ENCODE measurements at regions of chr17 and their contacts with region 1.

Region 1: DNA sequence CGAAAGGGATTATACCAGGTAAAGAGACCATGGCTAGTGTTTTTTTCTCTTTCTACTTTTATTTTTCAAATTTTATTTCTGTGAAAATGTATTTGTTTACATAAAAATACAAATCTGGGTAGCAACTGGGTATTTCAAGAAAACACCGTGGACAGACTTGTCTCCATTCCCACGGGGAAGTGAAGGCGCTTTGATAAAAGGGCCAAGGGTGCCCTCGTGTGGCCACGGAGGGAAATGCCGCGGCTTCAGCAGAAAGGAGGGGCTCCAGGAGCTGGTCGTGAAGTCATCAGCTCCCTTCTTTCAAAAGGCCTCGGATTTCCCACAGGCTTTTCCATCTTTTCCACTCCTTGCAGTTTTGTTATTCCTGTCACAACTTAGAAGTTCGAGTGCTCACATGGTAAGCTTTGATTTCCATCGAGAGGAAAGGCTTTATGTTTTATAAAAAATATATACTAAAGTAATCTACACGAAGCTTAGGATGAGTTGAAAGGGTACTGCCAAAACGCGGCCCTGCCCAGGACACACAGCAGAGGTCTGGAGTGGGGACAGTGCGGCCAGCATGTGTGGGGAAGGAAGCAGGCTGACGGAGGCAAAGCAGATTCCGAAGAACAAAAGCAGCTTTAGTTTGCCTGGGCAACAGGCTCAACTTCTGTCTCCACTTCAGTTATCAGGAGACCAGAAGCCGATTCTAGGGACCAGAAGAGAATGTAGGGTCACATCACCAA is 15.3 kb upstream of the MNT start:
- H3K4me3 ChIP-seq: no peak overlapping the region
- H3K27ac ChIP-seq: no peak overlapping the region
- H3K4me1 ChIP-seq: no peaks in the 10 kb centered on the region
- CTCF ChIP-seq: peak; percentile 65

Region 2: DNA sequence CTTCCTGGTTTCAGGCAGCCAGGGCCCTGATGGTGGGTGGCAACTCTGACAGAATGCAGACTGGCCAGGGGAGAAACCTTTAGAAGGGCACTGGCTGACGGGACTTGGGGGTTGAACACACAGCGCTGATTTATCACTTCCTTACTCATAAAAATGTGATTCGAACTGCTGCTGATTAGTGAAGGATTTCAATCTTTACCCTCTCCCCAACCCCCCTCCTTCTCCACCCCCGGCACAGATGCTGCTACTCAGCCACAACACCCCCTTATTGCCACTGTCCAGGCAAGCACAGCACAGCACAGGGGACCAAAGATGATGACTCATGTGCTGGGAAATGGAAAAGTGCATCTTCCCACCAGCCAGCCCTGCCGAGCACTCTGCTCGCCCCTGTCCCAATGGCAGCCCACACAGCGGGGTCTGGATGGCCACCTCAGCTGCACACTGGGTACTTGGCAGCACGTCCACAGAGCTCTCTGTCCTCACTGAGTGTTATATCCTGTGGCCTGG is 182.7 kb before region 1 on chr17:
- CTCF ChIA-PET with region 1: no interaction called
- POLR2A ChIA-PET with region 1: no interaction called
- H3K4me3 ChIP-seq: no peak overlapping the region
- H3K27ac ChIP-seq: no peak overlapping the region
- H3K4me1 ChIP-seq: no peaks in the 10 kb centered on the region
- CTCF ChIP-seq: no peak

Region 3: GRCh38 chr17:2354311-2354710 is 61.9 kb before region 1 on chr17:
- CTCF ChIA-PET with region 1: interaction called, 12 read pairs
- POLR2A ChIA-PET with region 1: no interaction called
- H3K4me3 ChIP-seq: no peak overlapping the region
- H3K27ac ChIP-seq: no peak overlapping the region
- H3K4me1 ChIP-seq: peaks cover 4% of the 10 kb centered on the region; the same call in 1 of the 2 replicates
- CTCF ChIP-seq: no peak

Region 4: GRCh38 chr17:2366747-2367494 is 49.3 kb before region 1 on chr17:
- CTCF ChIA-PET with region 1: interaction called, 18 read pairs
- POLR2A ChIA-PET with region 1: no interaction called
- H3K4me3 ChIP-seq: no peak overlapping the region
- H3K27ac ChIP-seq: no peak overlapping the region
- H3K4me1 ChIP-seq: no peaks in the 10 kb centered on the region; the same call in 1 of the 2 replicates
- CTCF ChIP-seq: no peak

Region 5: DNA sequence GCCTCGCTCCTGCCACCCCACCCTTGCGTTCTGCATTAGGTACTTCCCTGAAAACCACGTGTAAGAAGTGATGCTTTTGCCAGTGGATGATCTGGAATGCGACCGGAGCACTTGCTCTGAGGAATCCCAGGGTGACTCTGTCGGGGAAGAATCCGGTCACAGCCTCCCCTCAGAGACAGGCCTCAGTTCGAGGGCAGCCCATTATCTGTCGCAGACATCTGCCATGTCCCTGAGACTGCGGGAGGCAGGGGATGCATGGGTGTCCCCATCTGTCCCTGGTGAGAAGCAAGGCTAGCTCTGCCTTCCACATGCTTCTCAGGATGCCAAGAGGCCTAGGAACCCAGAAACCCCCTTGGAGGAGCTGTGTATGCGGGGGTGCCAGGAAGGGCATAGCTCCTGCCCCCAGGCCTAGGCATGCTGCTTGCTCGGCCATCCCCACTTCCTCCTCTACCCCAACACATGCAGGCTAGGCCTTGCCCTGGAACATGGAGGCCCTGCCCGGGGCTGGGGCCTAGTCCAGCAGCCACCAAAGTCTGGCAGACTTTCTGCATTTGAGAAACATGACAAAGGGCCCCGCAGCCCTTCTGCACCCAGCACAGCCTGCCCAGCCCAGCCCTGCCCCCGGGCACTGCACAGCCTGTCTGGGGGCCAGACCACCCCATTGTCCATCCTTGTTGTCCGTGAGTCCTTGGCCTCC is 35.8 kb before region 1 on chr17:
- CTCF ChIA-PET with region 1: interaction called, 470 read pairs
- POLR2A ChIA-PET with region 1: interaction called, 42 read pairs
- H3K4me3 ChIP-seq: no peak overlapping the region
- H3K27ac ChIP-seq: no peak overlapping the region
- H3K4me1 ChIP-seq: peaks cover 14% of the 10 kb centered on the region
- CTCF ChIP-seq: no peak

Region 6: GRCh38 chr17:2392252-2393173 is 23.7 kb before region 1 on chr17:
- CTCF ChIA-PET with region 1: interaction called, 470 read pairs
- POLR2A ChIA-PET with region 1: interaction called, 7 read pairs
- H3K4me3 ChIP-seq: peak overlapping the region; percentile 65
- H3K27ac ChIP-seq: peak overlapping the region; percentile 97
- H3K4me1 ChIP-seq: peaks cover 36% of the 10 kb centered on the region
- CTCF ChIP-seq: 0 out of 2 replicates have a peak, but pooled peaks have one; percentile 7

Region 7: DNA sequence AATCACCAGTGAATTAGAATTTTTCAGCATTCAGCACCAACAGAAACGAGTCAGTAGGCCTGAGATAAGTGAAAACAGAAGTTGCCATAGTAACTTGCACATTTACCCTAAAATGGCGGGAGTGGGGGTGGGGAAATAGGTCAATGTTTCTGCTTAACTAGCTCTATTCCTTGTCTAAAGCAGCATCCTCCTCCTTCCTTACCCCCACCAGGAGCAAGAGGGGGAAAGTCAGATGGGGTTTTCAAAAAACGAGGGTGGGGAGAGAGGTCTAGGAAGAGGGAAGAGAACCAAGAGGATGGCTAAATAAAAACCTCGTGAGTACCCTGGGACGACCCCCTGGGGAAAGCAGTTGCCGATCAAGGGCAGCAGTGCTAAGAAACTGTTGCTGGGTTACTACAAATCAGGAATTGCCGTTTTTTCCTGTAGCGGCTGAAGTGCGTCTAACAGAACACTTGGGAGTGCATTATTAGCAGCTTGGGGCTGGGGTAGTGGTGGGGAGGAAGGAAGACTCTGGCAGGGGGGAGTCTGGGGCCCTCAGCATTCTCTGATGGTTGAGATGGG is 19.1 kb after region 1 on chr17:
- CTCF ChIA-PET with region 1: interaction called, 58 read pairs
- POLR2A ChIA-PET with region 1: no interaction called
- H3K4me3 ChIP-seq: no peak overlapping the region
- H3K27ac ChIP-seq: peak overlapping the region; percentile 30; the same call in 1 of the 2 replicates
- H3K4me1 ChIP-seq: no peaks in the 10 kb centered on the region
- CTCF ChIP-seq: no peak